ENCODE measurements at regions of chr9 and their contacts with region 1.

Region 1: GRCh38 chr9:97615439-97616072 is 17.6 kb downstream of the TSTD2 start:
- DNase-seq: peak; percentile 29
- H3K4me3 Mint-ChIP-seq: no peak overlapping the region
- H3K27ac Mint-ChIP-seq: no peak overlapping the region
- H3K4me1 Mint-ChIP-seq: peaks cover 17% of the 10 kb centered on the region
- H3K27me3 Mint-ChIP-seq: no peaks in the 10 kb centered on the region

Region 2: DNA sequence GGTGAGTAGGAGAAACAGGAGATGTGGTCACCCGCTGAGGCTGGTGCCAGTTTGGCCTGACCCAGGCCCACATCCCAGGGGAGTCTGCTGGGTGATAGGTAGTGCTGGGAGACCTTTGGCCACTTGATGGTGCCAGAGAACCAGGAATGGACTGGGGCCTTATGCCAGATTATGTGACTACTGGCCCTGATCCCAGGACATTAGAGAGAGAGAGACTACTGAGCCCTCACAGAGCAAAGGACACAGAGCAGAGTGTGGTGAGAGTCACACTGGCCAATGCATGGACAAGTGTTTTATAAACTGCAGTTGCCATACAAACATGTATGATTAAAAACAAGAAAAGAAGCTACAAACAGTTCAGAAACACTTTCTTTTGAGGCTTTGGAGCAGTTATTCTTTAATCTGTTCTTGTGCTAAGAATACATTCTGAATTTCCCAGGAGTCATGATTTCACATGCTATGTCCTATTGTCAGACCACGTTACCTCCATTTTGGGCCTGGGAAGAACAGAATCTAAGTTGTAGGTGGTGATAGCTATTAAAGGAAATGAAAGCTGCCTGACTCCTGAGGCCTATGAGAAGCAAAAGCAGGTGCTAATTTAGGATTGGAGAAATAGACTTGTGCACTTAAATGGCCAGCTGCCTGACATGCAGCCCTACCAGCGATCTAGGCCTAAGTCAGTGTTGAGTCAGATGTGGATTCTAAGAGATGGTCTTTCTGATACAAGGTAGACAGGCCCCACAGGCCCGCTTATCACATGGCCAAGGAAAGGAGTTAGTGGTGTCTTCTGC is 146.7 kb before region 1 on chr9:
- intact Hi-C with region 1: loop called (anchors 5 kb)
- DNase-seq: peak; percentile 14
- H3K4me3 Mint-ChIP-seq: no peak overlapping the region
- H3K27ac Mint-ChIP-seq: no peak overlapping the region
- H3K4me1 Mint-ChIP-seq: no peaks in the 10 kb centered on the region
- H3K27me3 Mint-ChIP-seq: no peaks in the 10 kb centered on the region

Measured in activated T-helper 2 cell treated with anti-CD3 and anti-CD28 coated beads, Interferon-gamma antibody, Interleukin-2, Interleukin-4, amounts not matched to agents 10 μg/mL and 5 μg/mL and 100 μg/mL, durations not matched to agents 14 hours and 24 hours and 36 hours (primary cell).